Calu3 (cell line): ENCODE measurements at regions of chr2 and their contacts with region 1.

Region 1: GRCh38 chr2:68330691-68331090 is 10.9 kb upstream of the CNRIP1 start:
- DNase-seq: no peak
- H3K4me3 Mint-ChIP-seq: no peak overlapping the region
- H3K27ac Mint-ChIP-seq: no peak overlapping the region
- H3K4me1 Mint-ChIP-seq: no peaks in the 10 kb centered on the region
- H3K27me3 Mint-ChIP-seq: peaks cover 14% of the 10 kb centered on the region
- CTCF ChIP-seq: no peak

Region 2: GRCh38 chr2:66596256-66596655 is 1734.4 kb before region 1 on chr2:
- CTCF ChIA-PET with region 1: interaction called, 12 read pairs
- intact Hi-C with region 1: no loop called
- DNase-seq: no peak
- H3K4me3 Mint-ChIP-seq: no peak overlapping the region
- H3K27ac Mint-ChIP-seq: no peak overlapping the region
- H3K4me1 Mint-ChIP-seq: no peaks in the 10 kb centered on the region
- H3K27me3 Mint-ChIP-seq: no peaks in the 10 kb centered on the region
- CTCF ChIP-seq: no peak